Vagina (tissue), 2 donors: ENCODE measurements at regions of chr16 and their contacts with region 1.

Region 1: GRCh38 chr16:50152807-50153452 is at the start of gene TENT4B:
- DNase-seq: no peak
- H3K4me3 ChIP-seq: peak within 1 kb of the TSS; percentile 85 to 88
- H3K27ac ChIP-seq: peak within 1 kb of the TSS; percentile 93
- H3K4me1 ChIP-seq: peaks cover 36% of the 10 kb centered on the region
- H3K27me3 ChIP-seq: no peaks in the 10 kb centered on the region
- CTCF ChIP-seq: no peak
- POLR2A ChIP-seq: peak in 1 of 2 donors; percentile 59
- total RNA-seq, gene TENT4B: 14.0 TPM

Region 2: DNA sequence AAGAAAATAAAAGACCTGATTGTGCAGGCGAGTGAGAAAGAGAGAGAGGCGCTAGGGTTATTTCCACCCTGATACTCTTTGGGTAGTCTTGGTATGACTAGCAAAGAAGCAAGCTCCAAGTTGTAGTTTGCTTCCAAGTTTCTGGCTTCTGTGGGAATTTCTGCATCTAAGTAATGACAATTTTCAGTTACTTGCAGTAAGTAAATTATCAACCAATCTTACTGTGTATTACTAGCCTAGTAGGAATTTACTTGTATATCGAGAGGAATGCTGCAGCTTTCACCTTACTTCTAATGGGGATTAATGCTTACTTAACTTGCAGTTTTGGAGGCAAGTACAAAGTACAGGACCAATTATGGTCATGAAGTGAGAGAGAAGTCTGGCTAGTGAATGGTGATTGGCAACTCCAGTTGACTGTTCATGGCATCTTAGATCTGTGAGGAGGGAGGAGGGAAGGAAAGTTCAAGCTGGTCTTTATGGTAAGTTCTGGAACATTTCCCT is 32.1 kb after region 1 on chr16:
- intact Hi-C with region 1: no loop called
- DNase-seq: no peak
- H3K4me3 ChIP-seq: no peak overlapping the region
- H3K27ac ChIP-seq: no peak overlapping the region
- H3K4me1 ChIP-seq: peaks cover 58% of the 10 kb centered on the region
- H3K27me3 ChIP-seq: no peaks in the 10 kb centered on the region
- CTCF ChIP-seq: no peak
- POLR2A ChIP-seq: no peak

Region 3: DNA sequence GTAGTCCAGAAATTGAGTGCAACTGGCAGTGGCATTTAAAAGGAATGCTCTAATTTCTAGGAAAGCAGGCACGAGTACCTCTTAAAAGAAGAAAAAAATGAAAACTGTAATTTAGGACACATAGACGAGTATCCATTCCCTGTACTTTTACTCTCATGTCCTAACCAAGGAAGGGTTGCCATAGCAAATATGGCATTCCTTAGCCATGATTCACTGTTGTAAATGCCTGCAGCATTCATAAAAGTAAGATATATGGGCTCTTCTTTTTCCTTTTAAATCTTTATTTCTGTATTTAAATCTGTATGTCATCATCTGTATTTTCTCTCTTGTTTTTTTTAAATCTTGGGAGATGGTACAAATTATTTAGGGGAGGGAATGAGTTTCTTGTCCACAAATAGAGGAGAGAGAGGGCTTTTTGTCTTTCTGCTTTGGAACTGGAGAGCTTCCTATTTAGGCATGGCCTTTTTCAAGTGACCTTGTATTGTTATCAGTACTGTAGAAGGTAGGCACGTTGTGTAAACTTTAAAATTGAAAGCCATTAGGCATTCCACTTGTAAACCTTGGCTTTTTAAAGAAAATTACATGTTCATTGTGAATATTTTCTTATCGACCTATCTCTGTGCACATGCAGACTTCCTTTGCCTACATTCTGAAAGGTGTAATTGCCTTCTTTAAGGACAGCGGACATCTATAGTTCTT is 50.1 kb after region 1 on chr16:
- intact Hi-C with region 1: loop called (anchors 5 kb)
- DNase-seq: no peak
- H3K4me3 ChIP-seq: no peak overlapping the region
- H3K27ac ChIP-seq: peak overlapping the region; percentile 34
- H3K4me1 ChIP-seq: peaks cover 51% of the 10 kb centered on the region
- H3K27me3 ChIP-seq: no peaks in the 10 kb centered on the region
- CTCF ChIP-seq: no peak
- POLR2A ChIP-seq: no peak